ENCODE measurements at regions of chr1 and their contacts with region 1.

Region 1: GRCh38 chr1:246931549-246932365 is at the start of gene AHCTF1:
- DNase-seq: peak; percentile 86 to 98 (median 95)
- ATAC-seq: peak; percentile 95
- H3K4me3 ChIP-seq: peak within 1 kb of the TSS; percentile 87
- H3K4me3 Mint-ChIP-seq: peak within 1 kb of the TSS; percentile 91 to 98 (median 96)
- H3K27ac ChIP-seq: peak within 1 kb of the TSS; percentile 86
- H3K27ac Mint-ChIP-seq: peak within 1 kb of the TSS; percentile 92 to 99 (median 96)
- H3K4me1 ChIP-seq: peaks cover 7 to 8% of the 10 kb centered on the region in 2 donors
- H3K4me1 Mint-ChIP-seq: peaks cover 30 to 50% (median 35%) of the 10 kb centered on the region in 7 donors
- H3K27me3 ChIP-seq: no peaks in the 10 kb centered on the region
- H3K27me3 Mint-ChIP-seq: peaks cover 0 to 4% (median 0%) of the 10 kb centered on the region in 5 donors
- total RNA-seq, gene AHCTF1: 31.8 to 66.5 (median 57.3) TPM

Region 2: DNA sequence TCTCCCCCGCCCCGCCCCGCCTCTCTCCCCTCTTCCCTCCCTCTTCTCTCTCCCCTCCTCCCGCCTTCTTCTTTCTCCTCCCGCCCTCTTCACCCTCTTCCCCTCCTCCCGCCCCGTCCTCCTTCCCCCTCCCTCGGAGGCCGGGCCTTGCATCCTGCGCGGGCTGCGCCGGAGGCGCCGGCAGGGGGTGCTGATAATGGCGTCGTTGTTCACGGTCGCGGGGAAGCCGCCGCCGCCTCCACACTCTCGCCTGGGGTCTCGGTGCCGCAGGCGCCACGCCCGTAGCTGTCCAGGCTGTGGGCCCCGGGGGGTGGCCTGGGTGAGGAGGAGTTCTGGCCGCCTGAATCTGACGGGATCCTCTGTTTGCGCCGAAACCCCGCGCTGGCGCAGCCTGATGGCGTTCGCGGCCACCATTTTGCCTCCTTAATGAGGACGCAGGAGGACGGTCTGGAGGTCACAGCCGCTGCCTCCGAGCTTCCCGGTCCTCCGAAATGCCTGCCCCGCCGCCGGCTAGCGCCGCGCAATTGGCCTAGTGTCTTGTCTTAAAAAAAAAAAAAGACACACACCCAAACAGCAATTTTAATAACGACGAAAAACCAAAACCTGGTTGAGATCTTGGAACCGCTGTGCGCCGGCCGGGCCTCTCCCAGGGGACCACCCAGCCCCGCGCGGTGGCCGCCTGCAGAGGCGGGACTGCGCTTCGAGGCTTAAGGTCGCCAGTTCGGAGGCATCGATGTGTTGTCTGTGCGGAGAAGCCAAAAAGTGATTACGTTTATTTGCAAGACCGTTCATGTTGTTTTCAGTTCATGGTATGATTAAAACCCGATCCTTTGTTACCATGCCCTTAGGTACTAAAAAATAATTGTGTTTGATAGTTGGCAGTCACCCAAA is 1960.9 kb before region 1 on chr1:
- CTCF ChIA-PET with region 1: no interaction called
- POLR2A ChIA-PET with region 1: no interaction called
- intact Hi-C with region 1: loop called in 1 of 2 experiments (anchors 2 kb)
- DNase-seq: peak; percentile 91 to 97 (median 95)
- ATAC-seq: peak; percentile 88
- H3K4me3 ChIP-seq: peak overlapping the region; percentile 81
- H3K4me3 Mint-ChIP-seq: peak overlapping the region; percentile 91 to 95 (median 93)
- H3K27ac ChIP-seq: peak overlapping the region; percentile 99
- H3K27ac Mint-ChIP-seq: peak overlapping the region; percentile 97 to 100 (median 99)
- H3K4me1 ChIP-seq: peaks cover 5 to 12% of the 10 kb centered on the region in 2 donors
- H3K4me1 Mint-ChIP-seq: peaks cover 7 to 31% (median 25%) of the 10 kb centered on the region in 7 donors
- H3K27me3 ChIP-seq: no peaks in the 10 kb centered on the region
- H3K27me3 Mint-ChIP-seq: peaks cover 0 to 14% (median 0%) of the 10 kb centered on the region in 5 donors

Region 3: GRCh38 chr1:246724016-246724730 is 207.6 kb before region 1 on chr1 and contains the start of gene SCCPDH:
- CTCF ChIA-PET with region 1: no interaction called
- POLR2A ChIA-PET with region 1: no interaction called
- intact Hi-C with region 1: loop called in 1 of 2 experiments (anchors 10 kb)
- DNase-seq: peak; percentile 21 to 82 (median 50)
- ATAC-seq: peak; percentile 92
- H3K4me3 ChIP-seq: peak within 1 kb of the TSS; percentile 60
- H3K4me3 Mint-ChIP-seq: peak within 1 kb of the TSS; percentile 81 to 92 (median 90)
- H3K27ac ChIP-seq: peak within 1 kb of the TSS; percentile 45
- H3K27ac Mint-ChIP-seq: peak within 1 kb of the TSS; percentile 34 to 75 (median 46)
- H3K4me1 ChIP-seq: no peaks in the 10 kb centered on the region
- H3K4me1 Mint-ChIP-seq: peaks cover 5 to 17% (median 9%) of the 10 kb centered on the region in 7 donors
- H3K27me3 ChIP-seq: no peaks in the 10 kb centered on the region
- H3K27me3 Mint-ChIP-seq: peaks cover 0 to 10% (median 7%) of the 10 kb centered on the region in 5 donors
- total RNA-seq, gene SCCPDH: 3.5 to 14.5 (median 5.3) TPM

Region 4: GRCh38 chr1:246794835-246795671 is 136.7 kb before region 1 on chr1:
- CTCF ChIA-PET with region 1: no interaction called
- POLR2A ChIA-PET with region 1: no interaction called
- intact Hi-C with region 1: no loop called
- DNase-seq: no peak
- ATAC-seq: peak; percentile 50
- H3K4me3 ChIP-seq: no peak overlapping the region
- H3K4me3 Mint-ChIP-seq: no peak overlapping the region
- H3K27ac ChIP-seq: no peak overlapping the region
- H3K27ac Mint-ChIP-seq: no peak overlapping the region
- H3K4me1 ChIP-seq: no peaks in the 10 kb centered on the region
- H3K4me1 Mint-ChIP-seq: peaks cover 0 to 5% (median 0%) of the 10 kb centered on the region in 7 donors
- H3K27me3 ChIP-seq: no peaks in the 10 kb centered on the region
- H3K27me3 Mint-ChIP-seq: peaks cover 0 to 26% (median 8%) of the 10 kb centered on the region in 5 donors

Region 5: GRCh38 chr1:247119600-247120407 is 188.0 kb after region 1 on chr1:
- CTCF ChIA-PET with region 1: no interaction called
- POLR2A ChIA-PET with region 1: no interaction called
- intact Hi-C with region 1: loop called in 1 of 2 experiments (anchors 5 kb)
- DNase-seq: no peak
- ATAC-seq: peak; percentile 32
- H3K4me3 ChIP-seq: no peak overlapping the region
- H3K4me3 Mint-ChIP-seq: no peak overlapping the region
- H3K27ac ChIP-seq: no peak overlapping the region
- H3K27ac Mint-ChIP-seq: no peak overlapping the region
- H3K4me1 ChIP-seq: no peaks in the 10 kb centered on the region
- H3K4me1 Mint-ChIP-seq: peaks cover 0 to 3% (median 0%) of the 10 kb centered on the region in 7 donors
- H3K27me3 ChIP-seq: no peaks in the 10 kb centered on the region
- H3K27me3 Mint-ChIP-seq: no peaks in the 10 kb centered on the region

Region 6: GRCh38 chr1:247331172-247331991 is 399.6 kb after region 1 on chr1 and contains the start of gene ZNF496:
- CTCF ChIA-PET with region 1: no interaction called
- POLR2A ChIA-PET with region 1: interaction called, 4 read pairs
- intact Hi-C with region 1: loop called (anchors 1 kb)
- DNase-seq: peak; percentile 46 to 77 (median 67)
- ATAC-seq: peak; percentile 76
- H3K4me3 ChIP-seq: peak within 1 kb of the TSS; percentile 64
- H3K4me3 Mint-ChIP-seq: peak within 1 kb of the TSS; percentile 91 to 99 (median 94)
- H3K27ac ChIP-seq: peak within 1 kb of the TSS; percentile 72
- H3K27ac Mint-ChIP-seq: peak within 1 kb of the TSS in 8 of 9 donors; percentile 77 to 92 (median 86)
- H3K4me1 ChIP-seq: peaks cover 6 to 14% of the 10 kb centered on the region in 2 donors
- H3K4me1 Mint-ChIP-seq: peaks cover 13 to 43% (median 29%) of the 10 kb centered on the region in 7 donors
- H3K27me3 ChIP-seq: no peaks in the 10 kb centered on the region
- H3K27me3 Mint-ChIP-seq: no peaks in the 10 kb centered on the region
- total RNA-seq, gene ZNF496: 9.5 to 25.1 (median 17.3) TPM

Region 7: DNA sequence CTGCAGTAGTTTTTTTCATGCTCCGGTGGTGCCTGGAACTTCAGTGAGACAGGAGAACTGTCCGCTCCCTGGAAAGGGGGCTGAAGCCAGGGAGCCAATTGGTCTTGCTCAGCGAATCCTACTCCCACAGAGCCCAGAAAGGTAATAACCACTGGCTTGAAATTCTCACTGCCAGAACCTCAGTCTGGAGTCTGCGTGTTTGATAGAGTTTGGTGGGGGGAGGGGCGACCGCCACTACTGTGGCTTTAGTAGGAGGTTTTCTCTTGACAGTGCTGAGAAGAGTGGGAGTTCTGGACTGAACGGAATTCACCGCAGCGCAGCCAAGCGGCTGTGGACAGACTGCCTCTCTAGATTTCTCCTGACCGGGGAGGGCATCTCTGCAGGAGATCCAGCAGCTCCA is 1257.3 kb after region 1 on chr1:
- CTCF ChIA-PET with region 1: no interaction called
- POLR2A ChIA-PET with region 1: no interaction called
- intact Hi-C with region 1: no loop called
- DNase-seq: no peak
- ATAC-seq: no peak
- H3K4me3 ChIP-seq: no peak overlapping the region
- H3K4me3 Mint-ChIP-seq: no peak overlapping the region
- H3K27ac ChIP-seq: no peak overlapping the region
- H3K27ac Mint-ChIP-seq: no peak overlapping the region
- H3K4me1 ChIP-seq: no peaks in the 10 kb centered on the region
- H3K4me1 Mint-ChIP-seq: no peaks in the 10 kb centered on the region
- H3K27me3 ChIP-seq: no peaks in the 10 kb centered on the region
- H3K27me3 Mint-ChIP-seq: peaks cover 0 to 20% (median 11%) of the 10 kb centered on the region in 5 donors

Region 8: DNA sequence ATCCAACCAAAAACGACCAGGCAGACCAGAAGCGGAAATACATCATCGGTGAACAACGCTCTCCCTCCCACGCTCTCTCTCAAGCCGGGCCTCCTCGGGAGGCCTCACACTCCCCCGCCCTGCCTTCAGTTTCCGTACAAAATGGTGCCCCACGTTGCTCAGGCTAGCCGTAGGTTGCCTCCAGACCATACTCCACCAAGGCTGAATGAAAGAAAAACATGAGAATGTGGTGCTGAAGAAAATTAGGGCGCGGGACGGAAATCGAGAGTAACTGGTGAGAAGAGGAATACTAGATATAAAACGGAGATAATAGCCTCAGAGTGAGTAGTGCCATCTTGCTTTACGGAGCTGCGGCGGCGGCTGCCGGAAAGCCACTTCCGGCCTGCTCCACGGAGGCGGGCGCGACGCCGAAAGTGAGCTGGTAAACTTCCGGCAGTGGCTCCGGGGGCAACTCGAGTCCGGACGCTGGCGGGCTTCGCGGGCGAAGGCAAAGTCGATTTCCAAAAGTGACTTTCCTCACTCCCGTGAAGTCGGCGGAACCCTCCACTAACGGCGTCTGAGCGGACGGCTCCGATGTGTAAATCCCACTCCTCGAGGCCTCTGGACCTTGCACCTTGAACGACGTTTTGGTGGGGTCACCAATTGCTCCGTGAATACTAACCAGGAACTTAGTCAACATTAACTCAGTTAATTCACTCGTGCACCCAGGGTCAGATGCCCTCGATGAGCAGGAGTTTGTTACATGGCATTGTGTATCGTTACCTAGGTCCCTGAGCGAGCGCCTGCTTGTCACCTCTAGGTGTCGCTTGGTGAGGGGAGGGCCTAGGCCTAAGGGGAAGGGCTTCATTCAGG is 1894.4 kb after region 1 on chr1 and contains the start of gene SH3BP5L:
- CTCF ChIA-PET with region 1: no interaction called
- POLR2A ChIA-PET with region 1: no interaction called
- intact Hi-C with region 1: loop called in 1 of 2 experiments (anchors 5 kb)
- DNase-seq: peak; percentile 78 to 96 (median 95)
- ATAC-seq: peak; percentile 92
- H3K4me3 ChIP-seq: peak within 1 kb of the TSS; percentile 89
- H3K4me3 Mint-ChIP-seq: peak within 1 kb of the TSS; percentile 92 to 99 (median 98)
- H3K27ac ChIP-seq: peak within 1 kb of the TSS; percentile 96
- H3K27ac Mint-ChIP-seq: peak within 1 kb of the TSS; percentile 95 to 100 (median 99)
- H3K4me1 ChIP-seq: peaks cover 37 to 47% of the 10 kb centered on the region in 2 donors
- H3K4me1 Mint-ChIP-seq: peaks cover 43 to 67% (median 52%) of the 10 kb centered on the region in 7 donors
- H3K27me3 ChIP-seq: no peaks in the 10 kb centered on the region
- H3K27me3 Mint-ChIP-seq: peaks cover 0 to 2% (median 0%) of the 10 kb centered on the region in 5 donors
- total RNA-seq, gene SH3BP5L: 22.5 to 51.1 (median 33.3) TPM